IMR-90 (cell line): ENCODE measurements at regions of chr15 and their contacts with region 1.

Region 1: GRCh38 chr15:47293466-47294162 is 423.7 kb upstream of the SEMA6D start:
- DNase-seq: peak; percentile 95
- ATAC-seq: peak; percentile 93
- H3K4me3 ChIP-seq: no peak overlapping the region
- H3K27ac ChIP-seq: peak overlapping the region; percentile 48; the same call in 1 of the 2 replicates
- H3K4me1 ChIP-seq: peaks cover 6% of the 10 kb centered on the region
- H3K27me3 ChIP-seq: no peaks in the 10 kb centered on the region
- CTCF ChIP-seq: no peak
- POLR2A ChIP-seq: no peak
- RAD21 ChIP-seq: no peak

Region 2: GRCh38 chr15:47331841-47332393 is 38.3 kb after region 1 on chr15:
- CTCF ChIA-PET with region 1: no interaction called
- POLR2A ChIA-PET with region 1: no interaction called
- dilution Hi-C with region 1: no loop called
- in situ Hi-C with region 1: no loop called
- intact Hi-C with region 1: loop called (anchors 5 kb)
- DNase-seq: peak; percentile 83
- ATAC-seq: peak; percentile 81
- H3K4me3 ChIP-seq: no peak overlapping the region
- H3K27ac ChIP-seq: peak overlapping the region; percentile 80; the same call in 1 of the 2 replicates
- H3K4me1 ChIP-seq: peaks cover 5% of the 10 kb centered on the region
- H3K27me3 ChIP-seq: no peaks in the 10 kb centered on the region
- CTCF ChIP-seq: no peak
- POLR2A ChIP-seq: no peak
- RAD21 ChIP-seq: no peak

Region 3: DNA sequence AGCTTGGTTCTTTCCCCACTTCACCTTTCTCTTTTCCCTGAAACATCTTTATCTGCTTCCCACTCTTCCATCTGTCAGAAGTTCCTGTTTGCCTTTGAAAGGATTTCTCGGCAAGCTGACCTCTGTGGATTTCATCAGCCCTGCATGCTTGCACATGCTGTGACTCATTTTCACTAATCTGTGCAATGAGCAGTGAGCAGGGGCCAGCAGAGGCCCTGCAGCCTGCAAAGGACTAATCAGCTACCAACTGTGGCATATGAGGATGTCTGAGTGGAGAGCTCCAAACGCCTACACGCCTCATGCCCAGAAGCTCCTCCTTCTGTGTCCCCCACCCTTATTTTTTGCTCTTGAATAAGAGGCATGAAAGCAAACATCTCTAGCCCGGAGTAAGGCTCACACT is 90.7 kb after region 1 on chr15:
- CTCF ChIA-PET with region 1: interaction called, 6 read pairs
- POLR2A ChIA-PET with region 1: no interaction called
- dilution Hi-C with region 1: no loop called
- in situ Hi-C with region 1: no loop called
- intact Hi-C with region 1: loop called (anchors 1 kb)
- DNase-seq: peak; percentile 96
- ATAC-seq: peak; percentile 95
- H3K4me3 ChIP-seq: no peak overlapping the region
- H3K27ac ChIP-seq: no peak overlapping the region; the same call in 1 of the 2 replicates
- H3K4me1 ChIP-seq: peaks cover 11% of the 10 kb centered on the region
- H3K27me3 ChIP-seq: no peaks in the 10 kb centered on the region
- CTCF ChIP-seq: no peak
- POLR2A ChIP-seq: no peak
- RAD21 ChIP-seq: no peak; the same call in 1 of the 2 replicates

Region 4: GRCh38 chr15:47431501-47431900 is 137.9 kb after region 1 on chr15:
- CTCF ChIA-PET with region 1: no interaction called
- POLR2A ChIA-PET with region 1: no interaction called
- dilution Hi-C with region 1: no loop called
- in situ Hi-C with region 1: no loop called
- intact Hi-C with region 1: loop called (anchors 5 kb)
- DNase-seq: peak; percentile 97
- ATAC-seq: peak; percentile 81
- H3K4me3 ChIP-seq: no peak overlapping the region
- H3K27ac ChIP-seq: peak overlapping the region; percentile 11; the same call in 1 of the 2 replicates
- H3K4me1 ChIP-seq: peaks cover 20% of the 10 kb centered on the region
- H3K27me3 ChIP-seq: no peaks in the 10 kb centered on the region
- CTCF ChIP-seq: no peak
- POLR2A ChIP-seq: no peak
- RAD21 ChIP-seq: no peak

Region 5: GRCh38 chr15:47460795-47461573 is 167.4 kb after region 1 on chr15:
- CTCF ChIA-PET with region 1: no interaction called
- POLR2A ChIA-PET with region 1: no interaction called
- dilution Hi-C with region 1: no loop called
- in situ Hi-C with region 1: no loop called
- intact Hi-C with region 1: loop called (anchors 5 kb)
- DNase-seq: no peak
- ATAC-seq: peak; percentile 9; the same call in 1 of the 2 replicates
- H3K4me3 ChIP-seq: no peak overlapping the region
- H3K27ac ChIP-seq: peak overlapping the region; percentile 49; the same call in 1 of the 2 replicates
- H3K4me1 ChIP-seq: peaks cover 9% of the 10 kb centered on the region
- H3K27me3 ChIP-seq: no peaks in the 10 kb centered on the region
- CTCF ChIP-seq: no peak
- POLR2A ChIP-seq: no peak
- RAD21 ChIP-seq: no peak

Region 6: DNA sequence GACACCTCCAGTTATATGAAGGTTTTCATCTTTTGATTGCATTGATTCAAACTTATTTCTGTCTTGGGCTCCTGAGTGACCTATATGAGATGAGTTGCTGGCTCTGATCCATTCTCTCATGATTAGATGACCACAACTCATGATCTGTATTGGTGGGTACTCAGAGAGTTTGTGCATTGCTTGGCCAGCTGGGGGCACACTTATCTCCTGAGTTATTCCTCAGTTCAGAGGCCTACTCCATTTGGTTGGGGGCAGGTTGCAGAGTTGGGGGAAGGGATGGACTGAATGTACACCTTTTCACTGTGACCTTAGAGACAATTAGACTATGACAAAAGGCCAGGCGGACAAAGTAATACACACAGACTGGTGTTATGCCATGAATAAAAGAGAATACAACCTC is 257.5 kb after region 1 on chr15:
- CTCF ChIA-PET with region 1: no interaction called
- POLR2A ChIA-PET with region 1: no interaction called
- dilution Hi-C with region 1: no loop called
- in situ Hi-C with region 1: no loop called
- intact Hi-C with region 1: no loop called
- DNase-seq: no peak
- ATAC-seq: no peak
- H3K4me3 ChIP-seq: no peak overlapping the region
- H3K27ac ChIP-seq: no peak overlapping the region
- H3K4me1 ChIP-seq: no peaks in the 10 kb centered on the region
- H3K27me3 ChIP-seq: no peaks in the 10 kb centered on the region; the same call in 1 of the 2 replicates
- CTCF ChIP-seq: 0 out of 2 replicates have a peak, but pooled peaks have one; percentile 7
- POLR2A ChIP-seq: no peak
- RAD21 ChIP-seq: no peak